ENCODE measurements at regions of chr12 and their contacts with region 1.

Region 1: GRCh38 chr12:58302485-58303011 is 361.2 kb downstream of the ATP23 start:
- DNase-seq: peak in 2 of 6 donors; percentile 22 to 47
- ATAC-seq: peak; percentile 62 to 90 (median 79)
- H3K4me3 ChIP-seq: no peak overlapping the region
- H3K27ac ChIP-seq: peak overlapping the region in 1 of 4 donors; percentile 15
- H3K4me1 ChIP-seq: peaks cover 0 to 7% (median 3%) of the 10 kb centered on the region in 3 donors
- H3K27me3 ChIP-seq: no peaks in the 10 kb centered on the region
- CTCF ChIP-seq: no peak

Region 2: DNA sequence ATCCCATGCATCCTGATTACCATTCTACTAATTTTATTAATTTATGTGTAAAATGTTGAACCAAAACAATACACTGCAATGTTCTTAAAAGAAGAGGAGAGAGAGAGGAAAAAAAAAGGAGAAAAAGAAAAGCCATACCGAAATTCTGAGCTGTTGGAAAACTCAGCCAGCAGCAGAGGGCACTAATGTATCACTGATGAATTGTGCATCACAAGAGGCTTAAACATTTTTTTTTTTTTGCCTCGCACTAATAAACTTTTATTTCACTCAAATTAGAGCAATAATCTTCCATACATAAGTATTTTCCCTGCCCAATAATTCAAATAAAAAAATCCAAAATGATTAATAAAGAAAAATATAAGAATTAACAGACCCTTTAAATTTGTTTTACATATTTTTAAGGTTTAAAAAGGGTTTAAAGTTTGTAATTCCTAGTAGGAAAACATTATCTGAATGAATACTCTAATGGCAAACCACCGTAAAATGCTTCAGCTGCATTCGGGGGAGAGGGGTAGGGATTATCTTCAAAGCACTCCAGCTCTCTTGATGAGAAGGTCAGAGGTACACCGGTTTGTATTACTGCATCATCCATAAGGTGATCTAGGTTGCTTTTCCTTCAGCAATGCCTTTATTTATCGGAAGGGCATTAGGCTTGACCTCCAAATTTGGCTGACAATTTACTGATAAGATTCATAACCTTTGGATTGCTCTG is 319.2 kb before region 1 on chr12:
- intact Hi-C with region 1: loop called in 1 of 3 experiments (anchors 5 kb)
- DNase-seq: peak in 2 of 6 donors; percentile 13 to 33
- ATAC-seq: peak in 3 of 4 donors; percentile 60 to 68 (median 63)
- H3K4me3 ChIP-seq: no peak overlapping the region
- H3K27ac ChIP-seq: no peak overlapping the region
- H3K4me1 ChIP-seq: no peaks in the 10 kb centered on the region
- H3K27me3 ChIP-seq: no peaks in the 10 kb centered on the region
- CTCF ChIP-seq: peak in 3 of 4 donors; percentile 29 to 41 (median 34)